ENCODE measurements at regions of chr17 and their contacts with region 1.

Region 1: GRCh38 chr17:6473128-6473767 is 29.0 kb downstream of the PIMREG start:
- DNase-seq: peak; percentile 81
- H3K4me3 Mint-ChIP-seq: no peak overlapping the region
- H3K27ac Mint-ChIP-seq: no peak overlapping the region
- H3K4me1 Mint-ChIP-seq: no peaks in the 10 kb centered on the region
- H3K27me3 Mint-ChIP-seq: no peaks in the 10 kb centered on the region

Region 2: DNA sequence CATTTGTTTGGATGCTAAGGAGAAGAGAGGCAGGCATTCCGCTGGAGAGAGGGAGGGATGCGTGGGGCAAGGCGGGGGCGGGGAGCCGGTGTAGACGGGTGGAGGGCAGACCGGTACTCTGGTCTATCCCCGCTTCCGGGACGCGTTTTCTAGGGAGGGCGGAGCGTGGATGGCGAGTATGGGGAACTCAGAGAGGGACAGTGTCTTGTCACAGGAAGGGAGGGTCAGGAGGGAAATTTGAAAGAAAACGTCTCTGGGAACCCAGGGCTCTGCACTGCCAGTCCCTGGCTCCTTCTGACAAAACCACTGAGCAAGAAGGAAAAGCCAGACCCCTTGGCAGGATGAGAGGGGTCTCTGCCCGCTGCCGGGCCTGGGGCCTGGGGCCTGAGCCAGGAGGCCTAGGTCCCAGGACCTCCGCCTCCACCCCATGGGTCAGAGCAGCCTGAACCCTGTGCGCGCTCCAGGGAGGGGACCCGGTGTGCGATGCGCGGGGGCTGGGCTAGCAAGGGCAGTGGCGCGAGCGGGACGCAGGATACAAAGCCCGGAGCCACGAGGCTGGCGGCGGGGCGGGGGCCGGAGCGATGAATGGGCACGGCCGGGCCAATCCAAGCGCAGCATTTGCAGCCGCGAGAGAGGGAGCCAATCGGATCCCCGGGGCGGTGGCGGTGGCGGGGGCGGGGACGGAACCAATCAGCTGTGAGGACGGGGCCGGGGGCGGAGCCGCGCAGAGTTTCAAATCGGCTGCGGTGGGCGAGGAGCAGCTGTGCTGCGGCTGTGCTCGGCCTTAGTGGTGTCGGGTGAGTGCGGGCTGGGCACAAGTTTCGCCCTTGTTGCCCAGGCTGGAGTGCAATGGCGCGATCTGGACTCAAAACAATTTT is 29.3 kb before region 1 on chr17 and contains the start of gene PIMREG:
- CTCF ChIA-PET with region 1: interaction called, 10 read pairs
- intact Hi-C with region 1: no loop called
- DNase-seq: peak; percentile 98
- H3K4me3 Mint-ChIP-seq: peak within 1 kb of the TSS; percentile 97
- H3K27ac Mint-ChIP-seq: peak within 1 kb of the TSS; percentile 92
- H3K4me1 Mint-ChIP-seq: peaks cover 11% of the 10 kb centered on the region
- H3K27me3 Mint-ChIP-seq: peaks cover 5% of the 10 kb centered on the region
- total RNA-seq, gene PIMREG: 18.1 to 19.0 TPM

Region 3: GRCh38 chr17:6483507-6483906 is 10.3 kb after region 1 on chr17:
- CTCF ChIA-PET with region 1: interaction called, 17 read pairs
- intact Hi-C with region 1: no loop called
- DNase-seq: no peak
- H3K4me3 Mint-ChIP-seq: no peak overlapping the region
- H3K27ac Mint-ChIP-seq: no peak overlapping the region
- H3K4me1 Mint-ChIP-seq: no peaks in the 10 kb centered on the region
- H3K27me3 Mint-ChIP-seq: no peaks in the 10 kb centered on the region

Region 4: GRCh38 chr17:6523330-6523729 is 50.1 kb after region 1 on chr17:
- CTCF ChIA-PET with region 1: no interaction called
- intact Hi-C with region 1: no loop called
- DNase-seq: no peak
- H3K4me3 Mint-ChIP-seq: no peak overlapping the region
- H3K27ac Mint-ChIP-seq: no peak overlapping the region
- H3K4me1 Mint-ChIP-seq: no peaks in the 10 kb centered on the region
- H3K27me3 Mint-ChIP-seq: no peaks in the 10 kb centered on the region

Region 5: GRCh38 chr17:6548578-6549330 is 75.5 kb after region 1 on chr17:
- CTCF ChIA-PET with region 1: no interaction called
- intact Hi-C with region 1: loop called (anchors 5 kb)
- DNase-seq: peak; percentile 68
- H3K4me3 Mint-ChIP-seq: no peak overlapping the region
- H3K27ac Mint-ChIP-seq: no peak overlapping the region
- H3K4me1 Mint-ChIP-seq: peaks cover 8% of the 10 kb centered on the region
- H3K27me3 Mint-ChIP-seq: peaks cover 1% of the 10 kb centered on the region

Measured in activated naive CD4-positive, alpha-beta T cell treated with anti-CD3 and anti-CD28 coated beads for 36 hours (primary cell).